ENCODE measurements at regions of chr13 and their contacts with region 1.

Region 1: GRCh38 chr13:22278336-22278929 is 607.6 kb downstream of the FGF9 start:
- DNase-seq: peak; percentile 63
- ATAC-seq: peak; percentile 81
- H3K4me3 ChIP-seq: no peak overlapping the region
- H3K27ac ChIP-seq: no peak overlapping the region
- H3K4me1 ChIP-seq: no peaks in the 10 kb centered on the region; the same call in 1 of the 2 replicates
- H3K27me3 ChIP-seq: no peaks in the 10 kb centered on the region; the same call in 1 of the 2 replicates
- CTCF ChIP-seq: peak; percentile 69
- POLR2A ChIP-seq: no peak
- RAD21 ChIP-seq: peak; percentile 78

Region 2: GRCh38 chr13:21625366-21625765 is 653.1 kb before region 1 on chr13:
- CTCF ChIA-PET with region 1: no interaction called
- POLR2A ChIA-PET with region 1: no interaction called
- dilution Hi-C with region 1: no loop called
- in situ Hi-C with region 1: loop called (anchors 5 kb)
- intact Hi-C with region 1: loop called (anchors 1 kb)
- DNase-seq: peak; percentile 52
- ATAC-seq: peak; percentile 94
- H3K4me3 ChIP-seq: no peak overlapping the region
- H3K27ac ChIP-seq: no peak overlapping the region
- H3K4me1 ChIP-seq: no peaks in the 10 kb centered on the region
- H3K27me3 ChIP-seq: peaks cover 4% of the 10 kb centered on the region
- CTCF ChIP-seq: peak; percentile 74
- POLR2A ChIP-seq: no peak
- RAD21 ChIP-seq: peak; percentile 82

Region 3: DNA sequence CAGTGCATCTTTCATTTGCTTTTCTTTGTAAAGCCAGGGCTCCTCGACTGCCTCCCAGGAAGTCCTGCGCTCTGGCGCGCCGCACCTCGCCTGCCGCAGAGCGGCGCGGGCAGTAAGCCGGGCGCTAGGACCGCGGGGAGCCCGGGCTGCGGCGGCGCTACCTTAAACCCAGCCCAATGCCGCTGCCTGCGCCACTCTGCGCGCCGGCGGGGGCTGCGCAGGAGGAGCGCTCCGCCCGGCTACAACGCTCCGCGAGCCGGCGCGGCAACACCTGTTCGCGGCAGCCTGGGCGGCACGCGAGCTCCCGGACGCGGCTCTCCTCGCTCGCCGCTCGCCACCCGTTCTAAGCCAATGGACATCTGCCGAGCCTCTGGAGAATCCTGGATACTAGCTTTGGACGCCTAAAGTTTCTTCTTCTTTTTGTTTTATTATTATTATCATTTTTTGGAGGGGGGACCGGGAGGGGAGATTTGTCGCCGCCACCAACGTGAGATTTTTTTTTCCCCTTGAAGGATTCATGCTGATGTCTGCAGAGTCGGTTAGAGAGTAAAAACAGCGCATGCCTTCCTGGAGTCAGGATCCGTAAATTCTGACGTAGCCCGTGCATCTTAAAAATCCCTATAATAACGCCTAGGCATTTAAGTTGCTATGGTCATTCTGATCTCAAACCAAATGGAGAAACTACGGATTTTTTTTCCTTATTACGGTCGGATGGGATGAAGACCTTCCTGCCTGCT is 607.4 kb before region 1 on chr13 and contains the start of gene FGF9:
- CTCF ChIA-PET with region 1: interaction called, 4 read pairs
- POLR2A ChIA-PET with region 1: no interaction called
- dilution Hi-C with region 1: no loop called
- in situ Hi-C with region 1: no loop called
- intact Hi-C with region 1: loop called (anchors 2 kb)
- DNase-seq: peak; percentile 79
- ATAC-seq: peak; percentile 68
- H3K4me3 ChIP-seq: peak within 1 kb of the TSS; percentile 61
- H3K27ac ChIP-seq: peak within 1 kb of the TSS; percentile 31
- H3K4me1 ChIP-seq: peaks cover 9% of the 10 kb centered on the region
- H3K27me3 ChIP-seq: peaks cover 34% of the 10 kb centered on the region
- CTCF ChIP-seq: peak; percentile 18; the same call in 1 of the 2 replicates
- POLR2A ChIP-seq: no peak
- RAD21 ChIP-seq: no peak
- total RNA-seq, gene FGF9: under 0.01 TPM in 2 replicates

Region 4: DNA sequence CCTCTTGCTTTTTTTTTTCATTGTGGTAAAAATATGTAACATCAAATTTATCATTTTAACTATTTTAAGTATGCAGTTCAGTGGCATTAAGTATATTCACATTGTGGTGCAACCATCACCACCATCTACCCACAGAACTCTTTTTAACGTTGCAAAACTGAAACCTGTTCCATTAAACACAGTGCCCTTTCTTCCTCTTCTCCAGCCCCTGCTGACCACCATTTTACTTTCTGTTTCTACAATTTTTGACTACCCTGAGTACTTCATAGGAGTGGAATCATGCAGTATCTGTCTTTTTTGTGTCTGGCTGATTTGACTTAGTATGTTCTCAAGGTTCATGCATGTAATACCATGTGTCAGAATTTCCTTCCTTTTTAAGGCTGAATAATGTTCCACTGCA is 454.5 kb before region 1 on chr13:
- CTCF ChIA-PET with region 1: no interaction called
- POLR2A ChIA-PET with region 1: no interaction called
- dilution Hi-C with region 1: no loop called
- in situ Hi-C with region 1: no loop called
- intact Hi-C with region 1: loop called (anchors 10 kb)
- DNase-seq: no peak
- ATAC-seq: no peak
- H3K4me3 ChIP-seq: no peak overlapping the region
- H3K27ac ChIP-seq: no peak overlapping the region
- H3K4me1 ChIP-seq: peaks cover 2% of the 10 kb centered on the region; the same call in 1 of the 2 replicates
- H3K27me3 ChIP-seq: no peaks in the 10 kb centered on the region
- CTCF ChIP-seq: no peak
- POLR2A ChIP-seq: no peak
- RAD21 ChIP-seq: no peak

Region 5: GRCh38 chr13:21971662-21972621 is 306.5 kb before region 1 on chr13:
- CTCF ChIA-PET with region 1: no interaction called
- POLR2A ChIA-PET with region 1: no interaction called
- dilution Hi-C with region 1: no loop called
- in situ Hi-C with region 1: no loop called
- intact Hi-C with region 1: loop called (anchors 2 kb)
- DNase-seq: peak; percentile 96
- ATAC-seq: peak; percentile 82
- H3K4me3 ChIP-seq: no peak overlapping the region
- H3K27ac ChIP-seq: peak overlapping the region; percentile 91
- H3K4me1 ChIP-seq: peaks cover 25% of the 10 kb centered on the region
- H3K27me3 ChIP-seq: no peaks in the 10 kb centered on the region
- CTCF ChIP-seq: no peak
- POLR2A ChIP-seq: no peak
- RAD21 ChIP-seq: no peak

Measured in IMR-90 (cell line).